CD8-positive, alpha-beta T cell (primary cell): ENCODE measurements at regions of chr16 and their contacts with region 1.

Region 1: GRCh38 chr16:22190776-22191531 is 15.1 kb upstream of the EEF2K start:
- DNase-seq: peak; percentile 97 to 100 (median 100)
- ATAC-seq: peak; percentile 61
- H3K4me3 ChIP-seq: peak overlapping the region; percentile 62 to 66
- H3K4me3 Mint-ChIP-seq: peak overlapping the region; percentile 89
- H3K27ac ChIP-seq: peak overlapping the region; percentile 97 to 99
- H3K27ac Mint-ChIP-seq: peak overlapping the region; percentile 100
- H3K4me1 ChIP-seq: peaks cover 56% of the 10 kb centered on the region
- H3K4me1 Mint-ChIP-seq: peaks cover 69% of the 10 kb centered on the region
- H3K27me3 ChIP-seq: no peaks in the 10 kb centered on the region
- H3K27me3 Mint-ChIP-seq: peaks cover 2% of the 10 kb centered on the region
- CTCF ChIP-seq: no peak

Region 2: GRCh38 chr16:21599233-21600030 is 591.5 kb before region 1 on chr16 and contains the start of gene METTL9:
- CTCF ChIA-PET with region 1: no interaction called
- POLR2A ChIA-PET with region 1: no interaction called
- intact Hi-C with region 1: loop called (anchors 1 to 2 kb)
- DNase-seq: peak; percentile 92 to 97 (median 94)
- ATAC-seq: peak; percentile 91
- H3K4me3 ChIP-seq: peak within 1 kb of the TSS; percentile 69 to 96
- H3K4me3 Mint-ChIP-seq: peak within 1 kb of the TSS; percentile 87
- H3K27ac ChIP-seq: peak within 1 kb of the TSS; percentile 84 to 91
- H3K27ac Mint-ChIP-seq: peak within 1 kb of the TSS; percentile 96
- H3K4me1 ChIP-seq: peaks cover 47% of the 10 kb centered on the region
- H3K4me1 Mint-ChIP-seq: peaks cover 62% of the 10 kb centered on the region
- H3K27me3 ChIP-seq: no peaks in the 10 kb centered on the region
- H3K27me3 Mint-ChIP-seq: no peaks in the 10 kb centered on the region
- CTCF ChIP-seq: no peak
- total RNA-seq, gene METTL9: 93.8 to 99.0 TPM

Region 3: GRCh38 chr16:21952793-21953540 is 238.0 kb before region 1 on chr16 and contains the start of gene UQCRC2:
- CTCF ChIA-PET with region 1: interaction called, 6 read pairs
- POLR2A ChIA-PET with region 1: interaction called, 11 read pairs
- intact Hi-C with region 1: loop called (anchors 1 kb)
- DNase-seq: peak; percentile 70 to 96 (median 87)
- ATAC-seq: peak; percentile 89
- H3K4me3 ChIP-seq: peak within 1 kb of the TSS; percentile 85 to 87
- H3K4me3 Mint-ChIP-seq: peak within 1 kb of the TSS; percentile 100
- H3K27ac ChIP-seq: peak within 1 kb of the TSS; percentile 93 to 95
- H3K27ac Mint-ChIP-seq: peak within 1 kb of the TSS; percentile 98
- H3K4me1 ChIP-seq: peaks cover 36% of the 10 kb centered on the region
- H3K4me1 Mint-ChIP-seq: peaks cover 69% of the 10 kb centered on the region
- H3K27me3 ChIP-seq: no peaks in the 10 kb centered on the region
- H3K27me3 Mint-ChIP-seq: no peaks in the 10 kb centered on the region
- CTCF ChIP-seq: no peak
- total RNA-seq, gene UQCRC2: 177 to 186 TPM

Region 4: GRCh38 chr16:22077700-22078313 is 113.1 kb before region 1 on chr16:
- CTCF ChIA-PET with region 1: interaction called, 41 read pairs
- POLR2A ChIA-PET with region 1: interaction called, 5 read pairs
- intact Hi-C with region 1: loop called (anchors 1 kb)
- DNase-seq: peak; percentile 37 to 78 (median 70)
- ATAC-seq: peak; percentile 69
- H3K4me3 ChIP-seq: no peak overlapping the region
- H3K4me3 Mint-ChIP-seq: no peak overlapping the region
- H3K27ac ChIP-seq: no peak overlapping the region
- H3K27ac Mint-ChIP-seq: no peak overlapping the region
- H3K4me1 ChIP-seq: no peaks in the 10 kb centered on the region
- H3K4me1 Mint-ChIP-seq: peaks cover 3% of the 10 kb centered on the region
- H3K27me3 ChIP-seq: no peaks in the 10 kb centered on the region
- H3K27me3 Mint-ChIP-seq: no peaks in the 10 kb centered on the region
- CTCF ChIP-seq: peak; percentile 78

Region 5: DNA sequence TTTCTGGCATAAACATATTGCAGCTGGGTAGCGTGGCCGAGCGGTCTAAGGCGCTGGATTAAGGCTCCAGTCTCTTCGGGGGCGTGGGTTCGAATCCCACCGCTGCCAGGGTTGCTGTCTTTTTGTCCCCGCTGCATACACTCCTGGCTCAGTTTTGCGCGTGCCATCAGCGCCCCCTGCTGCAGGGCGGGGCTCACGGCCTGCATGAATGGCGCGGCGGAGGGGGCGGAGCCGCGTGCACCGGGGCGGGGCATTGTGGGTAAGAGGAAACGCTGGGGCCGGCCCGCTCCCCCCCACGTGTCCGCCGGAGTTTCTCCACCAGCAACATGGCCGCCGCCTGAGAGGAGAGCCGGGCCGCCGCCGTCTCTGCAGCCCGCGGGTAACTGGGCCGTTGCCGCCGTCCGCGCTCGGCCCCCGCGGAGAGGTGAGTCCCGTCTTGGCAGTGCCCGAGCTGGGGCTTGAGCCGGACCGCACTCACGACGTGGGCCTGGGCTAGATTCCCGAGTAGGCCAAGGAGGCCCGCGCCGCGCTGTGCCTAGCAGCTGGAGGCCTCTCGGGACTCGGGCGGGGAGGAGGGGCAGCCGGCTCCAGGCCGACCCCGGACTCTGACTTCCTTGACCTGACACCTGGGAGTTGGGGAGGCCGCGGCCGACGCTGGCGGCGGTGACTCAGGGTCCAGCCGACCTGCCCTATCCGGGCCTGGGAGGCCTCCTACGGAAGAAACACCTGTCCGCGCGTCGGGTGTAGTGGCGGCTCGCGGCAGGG is 106.3 kb after region 1 on chr16 and contains the start of gene POLR3E:
- CTCF ChIA-PET with region 1: interaction called, 70 read pairs
- POLR2A ChIA-PET with region 1: interaction called, 49 read pairs
- intact Hi-C with region 1: loop called (anchors 1 kb)
- DNase-seq: peak; percentile 99 to 100 (median 100)
- ATAC-seq: peak; percentile 82
- H3K4me3 ChIP-seq: peak within 1 kb of the TSS; percentile 87 to 94
- H3K4me3 Mint-ChIP-seq: peak within 1 kb of the TSS; percentile 97
- H3K27ac ChIP-seq: peak within 1 kb of the TSS; percentile 98 to 99
- H3K27ac Mint-ChIP-seq: peak within 1 kb of the TSS; percentile 100
- H3K4me1 ChIP-seq: peaks cover 18% of the 10 kb centered on the region
- H3K4me1 Mint-ChIP-seq: peaks cover 43% of the 10 kb centered on the region
- H3K27me3 ChIP-seq: no peaks in the 10 kb centered on the region
- H3K27me3 Mint-ChIP-seq: no peaks in the 10 kb centered on the region
- CTCF ChIP-seq: peak; percentile 78
- total RNA-seq, gene POLR3E: 300 to 307 TPM

Region 6: DNA sequence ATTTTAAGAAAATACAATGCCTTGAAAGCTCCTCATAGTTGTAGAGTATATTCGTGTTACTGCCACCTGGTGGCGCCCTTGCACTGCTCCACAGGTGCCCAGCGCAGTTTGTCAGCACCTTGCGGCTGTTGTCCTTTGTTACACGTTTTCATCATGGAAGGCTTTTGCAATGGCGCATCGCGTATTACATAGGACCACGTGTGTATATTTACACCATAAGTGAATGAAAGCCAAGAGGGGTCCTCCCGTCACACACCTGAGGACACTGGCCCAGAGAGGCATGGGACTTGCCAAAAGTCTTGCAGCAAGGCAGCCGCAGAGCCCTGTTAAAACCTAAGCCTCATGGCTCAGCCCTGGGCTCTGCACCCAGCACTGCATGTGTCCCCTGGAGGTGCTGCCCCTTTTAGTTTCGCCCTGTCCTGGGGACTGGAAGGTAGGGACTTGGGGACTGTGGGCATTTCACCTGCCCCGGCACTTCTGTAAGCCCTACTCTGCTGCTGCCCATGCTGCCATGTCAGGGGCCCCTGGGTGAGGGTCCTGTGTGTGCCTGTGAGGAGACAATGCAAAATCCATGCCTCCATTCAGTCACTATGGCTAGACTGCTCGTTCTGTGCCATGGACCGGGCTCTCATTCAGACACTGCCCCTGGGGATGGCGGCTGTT is 130.5 kb after region 1 on chr16:
- CTCF ChIA-PET with region 1: no interaction called
- POLR2A ChIA-PET with region 1: no interaction called
- intact Hi-C with region 1: no loop called
- DNase-seq: peak; percentile 44 to 84 (median 72)
- ATAC-seq: peak; percentile 77
- H3K4me3 ChIP-seq: no peak overlapping the region
- H3K4me3 Mint-ChIP-seq: no peak overlapping the region
- H3K27ac ChIP-seq: no peak overlapping the region
- H3K27ac Mint-ChIP-seq: peak overlapping the region; percentile 70
- H3K4me1 ChIP-seq: peaks cover 6% of the 10 kb centered on the region
- H3K4me1 Mint-ChIP-seq: peaks cover 9% of the 10 kb centered on the region
- H3K27me3 ChIP-seq: no peaks in the 10 kb centered on the region
- H3K27me3 Mint-ChIP-seq: no peaks in the 10 kb centered on the region
- CTCF ChIP-seq: peak; percentile 92

Region 7: GRCh38 chr16:22425036-22425801 is 234.3 kb after region 1 on chr16:
- CTCF ChIA-PET with region 1: no interaction called
- POLR2A ChIA-PET with region 1: no interaction called
- intact Hi-C with region 1: loop called in 1 of 2 experiments (anchors 10 kb)
- DNase-seq: no peak
- ATAC-seq: no peak
- H3K4me3 ChIP-seq: no peak overlapping the region
- H3K4me3 Mint-ChIP-seq: no peak overlapping the region
- H3K27ac ChIP-seq: no peak overlapping the region
- H3K27ac Mint-ChIP-seq: no peak overlapping the region
- H3K4me1 ChIP-seq: no peaks in the 10 kb centered on the region
- H3K4me1 Mint-ChIP-seq: no peaks in the 10 kb centered on the region
- H3K27me3 ChIP-seq: no peaks in the 10 kb centered on the region
- H3K27me3 Mint-ChIP-seq: no peaks in the 10 kb centered on the region
- CTCF ChIP-seq: no peak